Ovary (tissue), 10 donors: ENCODE measurements at regions of chr2 and their contacts with region 1.

Region 1: GRCh38 chr2:173210270-173211196 is 134.9 kb downstream of the MAP3K20 start:
- DNase-seq: peak; percentile 55 to 88 (median 70)
- H3K4me3 ChIP-seq: no peak overlapping the region
- H3K27ac ChIP-seq: peak overlapping the region; percentile 32 to 61
- H3K4me1 ChIP-seq: peaks cover 2% of the 10 kb centered on the region
- H3K27me3 ChIP-seq: no peaks in the 10 kb centered on the region
- CTCF ChIP-seq: peak; percentile 77 to 96 (median 94)
- EP300 ChIP-seq: peak; percentile 11
- POLR2A ChIP-seq: no peak

Region 2: GRCh38 chr2:172829229-172829628 is 381.3 kb before region 1 on chr2:
- intact Hi-C with region 1: no loop called
- DNase-seq: no peak
- H3K4me3 ChIP-seq: no peak overlapping the region
- H3K27ac ChIP-seq: no peak overlapping the region
- H3K4me1 ChIP-seq: no peaks in the 10 kb centered on the region
- H3K27me3 ChIP-seq: no peaks in the 10 kb centered on the region
- CTCF ChIP-seq: no peak
- EP300 ChIP-seq: no peak
- POLR2A ChIP-seq: no peak

Region 3: GRCh38 chr2:172864182-172864581 is 346.4 kb before region 1 on chr2:
- intact Hi-C with region 1: no loop called
- DNase-seq: peak; percentile 31 to 76 (median 52)
- H3K4me3 ChIP-seq: no peak overlapping the region
- H3K27ac ChIP-seq: no peak overlapping the region
- H3K4me1 ChIP-seq: no peaks in the 10 kb centered on the region
- H3K27me3 ChIP-seq: no peaks in the 10 kb centered on the region
- CTCF ChIP-seq: peak in 2 of 3 donors; percentile 16 to 39
- EP300 ChIP-seq: no peak
- POLR2A ChIP-seq: no peak

Region 4: DNA sequence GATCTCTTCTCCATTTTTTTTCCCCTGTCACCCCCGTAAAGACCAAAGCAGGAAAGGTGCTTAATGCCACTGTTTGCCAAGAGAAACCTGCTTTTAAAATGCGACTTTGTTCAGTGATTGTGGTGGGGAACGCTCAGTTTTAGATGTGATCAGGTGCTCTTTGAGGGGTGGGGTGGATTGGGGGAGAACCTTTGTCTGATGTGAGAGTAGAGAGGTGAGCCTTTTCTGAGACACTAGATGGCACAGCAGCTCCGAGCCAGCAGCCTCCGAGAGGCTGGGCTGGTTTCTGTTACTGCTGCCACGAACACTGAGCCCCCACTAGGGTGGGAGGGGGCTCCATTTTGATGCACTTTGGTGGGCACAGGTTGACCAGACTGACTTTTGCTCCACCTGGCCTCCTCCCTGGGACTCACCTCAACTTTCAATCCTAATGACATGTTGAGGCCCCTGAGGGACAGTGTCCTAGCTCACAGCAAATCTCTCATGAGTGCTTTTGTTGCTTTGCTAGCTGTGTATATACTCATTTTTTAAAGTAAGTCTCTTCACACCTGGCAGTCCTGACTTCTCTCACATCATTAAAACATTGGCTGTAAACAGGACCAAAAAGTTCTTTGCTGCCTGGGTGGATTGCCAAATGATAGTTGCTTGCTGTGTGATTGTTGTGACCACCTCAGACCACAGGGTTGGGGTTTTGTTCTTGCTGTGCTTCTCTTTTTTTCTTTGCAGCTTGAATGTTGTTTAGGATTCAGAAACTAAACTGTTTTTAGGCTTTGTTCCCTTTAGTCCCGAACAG is 233.1 kb before region 1 on chr2:
- intact Hi-C with region 1: loop called in 1 of 4 experiments (anchors 5 kb)
- DNase-seq: peak in 4 of 5 donors; percentile 33 to 66 (median 44)
- H3K4me3 ChIP-seq: no peak overlapping the region
- H3K27ac ChIP-seq: no peak overlapping the region
- H3K4me1 ChIP-seq: no peaks in the 10 kb centered on the region
- H3K27me3 ChIP-seq: no peaks in the 10 kb centered on the region
- CTCF ChIP-seq: peak in 2 of 3 donors; percentile 18 to 36
- EP300 ChIP-seq: no peak
- POLR2A ChIP-seq: no peak

Region 5: GRCh38 chr2:173027181-173028128 is 183.1 kb before region 1 on chr2:
- intact Hi-C with region 1: loop called (anchors 2 to 5 kb)
- DNase-seq: peak; percentile 78 to 95 (median 85)
- H3K4me3 ChIP-seq: no peak overlapping the region
- H3K27ac ChIP-seq: peak overlapping the region in 1 of 2 donors; percentile 77
- H3K4me1 ChIP-seq: peaks cover 9% of the 10 kb centered on the region
- H3K27me3 ChIP-seq: no peaks in the 10 kb centered on the region
- CTCF ChIP-seq: peak; percentile 94 to 98 (median 96)
- EP300 ChIP-seq: no peak
- POLR2A ChIP-seq: no peak

Region 6: GRCh38 chr2:173075781-173076580 is 134.6 kb before region 1 on chr2 and contains the start of gene MAP3K20:
- intact Hi-C with region 1: loop called in 3 of 4 experiments (anchors 2 to 5 kb)
- DNase-seq: peak; percentile 82 to 88 (median 86)
- H3K4me3 ChIP-seq: peak within 1 kb of the TSS; percentile 69
- H3K27ac ChIP-seq: peak within 1 kb of the TSS; percentile 99 to 100
- H3K4me1 ChIP-seq: peaks cover 3% of the 10 kb centered on the region
- H3K27me3 ChIP-seq: no peaks in the 10 kb centered on the region
- CTCF ChIP-seq: peak in 2 of 3 donors; percentile 60 to 63
- EP300 ChIP-seq: no peak
- POLR2A ChIP-seq: peak; percentile 83
- total RNA-seq, gene MAP3K20: 40.1 to 127 (median 107) TPM

Region 7: DNA sequence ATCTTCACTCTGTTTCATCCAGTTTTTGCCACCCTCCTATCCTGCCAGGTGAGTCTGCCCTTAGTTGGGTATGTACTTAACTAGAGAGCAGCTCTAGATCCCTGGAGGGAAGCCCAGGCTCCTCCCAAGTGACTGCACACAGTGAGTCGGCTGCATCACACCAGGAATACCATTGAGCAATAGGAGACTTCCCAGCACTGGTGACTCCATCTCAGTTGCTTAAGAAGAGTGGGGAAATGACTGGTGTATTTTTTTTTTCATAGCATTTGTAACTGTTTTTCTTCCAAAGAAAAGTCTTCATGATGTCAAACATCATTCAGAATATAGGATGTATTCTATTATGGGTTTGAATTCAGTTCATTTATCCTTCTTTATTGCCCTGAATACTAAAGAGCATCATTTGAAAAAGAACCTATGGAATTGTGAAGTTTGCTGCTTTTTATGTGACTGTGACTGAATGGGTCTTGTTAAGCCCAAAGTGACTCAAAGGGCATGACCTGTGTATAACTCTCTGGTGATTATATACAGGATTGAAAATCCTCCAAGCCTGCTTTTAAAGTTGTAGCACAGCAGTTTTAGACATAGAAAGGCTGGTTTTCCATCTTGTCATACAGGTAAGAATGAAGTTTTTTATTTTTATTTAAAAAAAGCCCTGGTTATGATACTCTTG is 50.6 kb before region 1 on chr2:
- intact Hi-C with region 1: no loop called
- DNase-seq: peak; percentile 40 to 94 (median 72)
- H3K4me3 ChIP-seq: no peak overlapping the region
- H3K27ac ChIP-seq: peak overlapping the region in 1 of 2 donors; percentile 15
- H3K4me1 ChIP-seq: peaks cover 9% of the 10 kb centered on the region
- H3K27me3 ChIP-seq: no peaks in the 10 kb centered on the region
- CTCF ChIP-seq: no peak
- EP300 ChIP-seq: peak; percentile 99
- POLR2A ChIP-seq: no peak